ENCODE measurements at regions of chr6 and their contacts with region 1.

Region 1: DNA sequence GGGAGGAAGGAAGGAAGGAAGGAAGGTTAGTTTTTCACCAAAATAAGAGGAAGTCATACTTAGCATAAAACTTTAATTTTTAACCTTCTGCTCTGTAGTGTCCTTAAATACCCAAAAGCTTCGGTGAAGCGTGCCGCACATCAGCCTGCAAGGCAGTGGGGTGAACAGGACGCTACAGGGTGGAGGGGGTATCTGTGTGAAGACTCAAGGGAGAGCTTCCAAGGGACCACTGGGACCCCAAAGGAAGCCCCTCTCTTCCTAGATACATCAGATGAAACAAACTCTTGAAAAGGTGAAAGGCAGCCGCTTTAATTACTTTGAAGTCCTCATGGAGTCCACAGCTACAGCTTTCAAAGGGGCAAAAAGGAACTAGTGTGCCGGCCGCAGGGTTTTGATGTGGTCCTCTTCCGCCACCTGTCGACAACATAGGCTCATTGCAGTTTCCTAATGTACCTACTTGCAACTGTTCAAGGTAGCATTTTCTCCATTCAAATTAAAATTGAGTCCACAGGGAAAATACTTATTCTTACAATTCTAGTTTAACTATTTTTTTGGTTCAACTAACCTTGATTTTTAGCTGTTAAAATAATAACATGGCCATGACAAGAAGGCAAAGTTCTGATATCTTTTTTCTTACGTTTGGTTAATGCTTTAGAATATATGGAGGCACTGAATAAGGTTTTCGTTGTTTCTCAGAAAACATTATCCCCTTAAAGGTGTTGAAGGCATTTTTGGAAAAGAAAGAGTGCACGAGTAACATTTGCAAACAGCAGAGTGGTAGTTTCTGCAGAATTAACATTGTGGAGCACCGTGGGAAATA is 135.0 kb upstream of the RIPOR2 start:
- DNase-seq: peak; percentile 69
- CTCF ChIP-seq: peak; percentile 78

Region 2: GRCh38 chr6:24848461-24848860 is 222.3 kb before region 1 on chr6:
- CTCF ChIA-PET with region 1: interaction called, 10 read pairs
- POLR2A ChIA-PET with region 1: no interaction called
- DNase-seq: no peak
- CTCF ChIP-seq: no peak

Region 3: DNA sequence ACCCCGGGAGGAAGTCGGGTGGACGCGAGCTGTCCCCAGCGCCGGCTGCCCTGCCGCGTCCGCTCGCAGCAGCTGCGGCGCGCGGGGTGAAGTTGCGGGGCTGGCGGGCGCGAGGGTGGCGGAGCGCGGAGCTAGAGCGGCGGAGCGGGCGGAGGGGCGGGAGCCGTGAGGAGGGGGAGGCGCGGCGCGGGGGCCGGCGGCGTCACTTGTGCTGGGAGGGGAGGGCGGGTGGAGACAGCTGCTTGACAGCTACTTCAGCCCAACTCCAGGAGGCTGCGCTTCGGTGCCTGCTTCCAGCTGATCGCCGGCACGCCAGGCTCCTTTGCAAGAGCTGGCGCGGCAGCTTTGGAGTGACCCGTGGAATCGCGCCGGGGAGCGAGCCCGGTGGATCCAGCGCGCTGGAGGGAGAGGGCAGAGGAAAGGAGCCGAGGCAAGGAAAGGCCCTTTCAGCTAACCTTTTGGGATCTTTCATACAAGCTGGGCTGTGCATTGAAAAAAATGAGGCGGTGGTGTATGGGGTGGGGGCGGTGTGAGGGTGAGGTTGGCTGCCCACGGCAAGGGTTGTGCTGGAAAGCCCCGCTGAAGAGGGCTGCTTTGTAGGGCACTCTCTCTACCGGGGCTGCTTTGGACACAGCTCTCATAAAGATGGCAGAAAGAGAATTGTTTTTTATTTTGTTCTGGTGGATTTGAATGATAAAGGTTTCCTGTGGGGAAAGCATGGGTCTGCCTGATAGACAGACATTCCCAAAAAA is 159.6 kb before region 1 on chr6:
- CTCF ChIA-PET with region 1: interaction called, 11 read pairs
- POLR2A ChIA-PET with region 1: no interaction called
- DNase-seq: peak; percentile 48
- CTCF ChIP-seq: no peak

Region 4: GRCh38 chr6:25027221-25027916 is 43.4 kb before region 1 on chr6:
- CTCF ChIA-PET with region 1: interaction called, 132 read pairs
- POLR2A ChIA-PET with region 1: interaction called, 4 read pairs
- DNase-seq: peak; percentile 87
- CTCF ChIP-seq: peak; percentile 79

Region 5: DNA sequence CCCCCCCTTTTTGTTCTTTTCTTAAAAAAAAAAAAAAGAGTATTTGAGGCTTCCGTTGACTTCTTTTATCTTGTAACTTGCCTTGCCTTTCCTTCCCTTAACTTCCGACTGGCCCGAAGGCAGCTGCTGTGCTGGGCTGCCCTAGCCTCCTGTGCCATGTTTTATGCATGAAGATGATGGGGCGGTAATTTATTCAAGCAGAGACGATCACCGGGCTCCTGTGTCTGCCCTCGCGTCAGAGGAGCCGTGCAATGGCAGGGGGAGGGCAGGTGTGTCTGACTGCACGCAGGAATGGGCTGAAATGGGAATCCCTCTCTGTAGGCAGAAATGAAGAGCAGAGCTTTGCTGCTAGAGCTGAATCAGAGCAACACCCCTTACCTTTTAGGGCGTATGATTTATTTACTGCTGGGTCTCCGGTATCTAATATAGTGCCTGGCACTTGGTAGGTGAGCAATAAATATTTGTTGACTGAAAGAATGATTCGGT is 28.7 kb before region 1 on chr6:
- CTCF ChIA-PET with region 1: interaction called, 24 read pairs
- POLR2A ChIA-PET with region 1: no interaction called
- DNase-seq: peak; percentile 28
- CTCF ChIP-seq: no peak

Region 6: GRCh38 chr6:25081563-25081962 is 10.8 kb after region 1 on chr6:
- CTCF ChIA-PET with region 1: interaction called, 13 read pairs
- POLR2A ChIA-PET with region 1: no interaction called
- DNase-seq: no peak
- CTCF ChIP-seq: no peak

Region 7: DNA sequence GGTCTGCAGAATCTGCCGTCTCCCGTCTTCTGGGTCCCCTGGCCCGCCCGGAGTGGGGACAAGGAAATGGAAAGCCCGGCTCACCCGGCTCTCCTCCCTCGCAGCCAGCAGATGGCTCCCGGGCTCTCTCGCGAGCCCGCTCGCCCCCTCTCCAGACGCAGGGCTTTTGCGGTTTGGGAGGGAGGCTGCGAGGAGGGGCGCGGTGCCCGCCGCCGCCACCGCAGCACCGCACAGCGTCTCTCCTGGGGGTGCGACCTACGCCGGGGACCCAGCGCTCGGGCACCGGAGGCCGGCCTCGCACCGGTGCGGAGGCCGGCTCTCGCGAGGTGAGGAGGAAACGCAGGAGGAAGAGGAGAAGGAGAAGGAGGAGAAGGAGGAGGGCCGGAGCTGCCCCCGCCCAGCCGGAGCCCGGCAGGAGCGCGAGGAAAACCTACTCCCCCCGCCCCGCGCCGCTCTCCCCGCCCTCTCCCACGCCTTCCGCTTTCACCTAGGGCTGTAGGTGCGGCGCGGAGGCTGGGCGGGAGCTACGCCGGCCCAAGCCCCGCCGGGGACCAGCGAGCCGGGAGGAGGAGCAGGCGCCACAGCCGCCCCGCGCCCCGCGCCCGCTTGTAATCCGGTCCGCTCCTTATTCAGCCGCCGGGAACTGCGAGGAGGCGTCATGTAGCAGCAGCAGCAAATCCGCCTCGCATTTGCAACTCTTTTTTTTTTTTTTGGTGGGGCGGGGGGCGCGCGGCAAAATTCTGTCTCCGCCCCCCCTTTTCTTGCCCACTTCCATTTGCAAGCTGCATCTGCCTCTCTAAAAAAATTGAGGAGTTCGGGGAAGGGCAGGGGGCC is 208.4 kb after region 1 on chr6 and contains the start of gene CARMIL1:
- CTCF ChIA-PET with region 1: no interaction called
- POLR2A ChIA-PET with region 1: no interaction called
- DNase-seq: peak; percentile 90
- CTCF ChIP-seq: peak; percentile 62